ENCODE measurements at regions of chr16 and their contacts with region 1.

Region 1: DNA sequence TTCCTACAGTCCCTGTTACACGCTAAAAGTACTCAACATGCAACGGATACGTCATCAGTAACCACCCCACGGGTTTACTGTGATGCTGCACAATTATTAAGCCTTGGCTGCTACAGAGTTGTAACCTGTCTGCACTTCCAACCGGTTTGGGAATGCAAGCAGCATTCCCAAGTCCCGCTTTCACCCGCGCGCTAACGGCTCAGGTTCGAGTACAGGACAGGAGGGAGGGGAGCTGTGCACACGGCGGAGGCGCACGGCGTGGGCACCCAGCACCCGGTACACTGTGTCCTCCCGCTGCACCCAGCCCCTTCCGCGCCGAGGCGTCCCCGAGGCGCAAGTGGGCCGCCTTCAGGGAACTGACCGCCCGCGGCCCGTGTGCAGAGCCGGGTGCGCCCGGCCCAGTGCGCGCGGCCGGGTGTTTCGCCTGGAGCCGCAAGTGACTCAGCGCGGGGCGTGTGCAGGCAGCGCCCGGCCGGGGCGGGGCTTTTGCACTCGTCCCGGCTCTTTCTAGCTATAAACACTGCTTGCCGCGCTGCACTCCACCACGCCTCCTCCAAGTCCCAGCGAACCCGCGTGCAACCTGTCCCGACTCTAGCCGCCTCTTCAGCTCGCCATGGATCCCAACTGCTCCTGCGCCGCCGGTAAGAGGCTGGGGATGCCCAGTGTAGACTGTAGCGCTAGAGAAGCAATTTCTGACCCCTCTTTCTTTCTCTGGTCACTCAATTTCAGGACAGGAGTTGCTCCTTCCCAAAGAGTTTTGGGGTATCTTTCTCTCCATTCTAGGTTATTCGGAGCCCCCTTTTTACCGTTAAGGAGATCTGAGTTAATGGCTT is at the start of gene MT2A:
- DNase-seq: no peak
- ATAC-seq: peak; percentile 93
- H3K4me3 ChIP-seq: peak within 1 kb of the TSS; percentile 70
- H3K27ac ChIP-seq: no peak within 1 kb of the TSS
- H3K4me1 ChIP-seq: peaks cover 25% of the 10 kb centered on the region
- H3K27me3 ChIP-seq: no peaks in the 10 kb centered on the region; a peak in 1 of 4 replicates
- CTCF ChIP-seq: no peak
- EP300 ChIP-seq: no peak
- POLR2A ChIP-seq: peak; percentile 67
- RAD21 ChIP-seq: no peak
- polyA plus RNA-seq, gene MT2A: 56.3 to 75.3 TPM

Region 2: GRCh38 chr16:56623637-56624036 is 15.4 kb after region 1 on chr16:
- CTCF ChIA-PET with region 1: interaction called, 7 read pairs
- POLR2A ChIA-PET with region 1: interaction called, 4 read pairs
- RAD21 ChIA-PET with region 1: interaction called, 23 read pairs
- SMC1A ChIA-PET with region 1: interaction called, 12 read pairs
- in situ Hi-C with region 1: no loop called
- intact Hi-C with region 1: no loop called
- DNase-seq: no peak
- ATAC-seq: no peak
- H3K4me3 ChIP-seq: no peak overlapping the region
- H3K27ac ChIP-seq: no peak overlapping the region
- H3K4me1 ChIP-seq: 0 out of 2 replicates have a peak, but pooled peaks cover 3% of the 10 kb centered on the region
- H3K27me3 ChIP-seq: no peaks in the 10 kb centered on the region; a peak in 2 of 4 replicates
- CTCF ChIP-seq: no peak
- EP300 ChIP-seq: no peak
- POLR2A ChIP-seq: no peak
- RAD21 ChIP-seq: no peak

Region 3: DNA sequence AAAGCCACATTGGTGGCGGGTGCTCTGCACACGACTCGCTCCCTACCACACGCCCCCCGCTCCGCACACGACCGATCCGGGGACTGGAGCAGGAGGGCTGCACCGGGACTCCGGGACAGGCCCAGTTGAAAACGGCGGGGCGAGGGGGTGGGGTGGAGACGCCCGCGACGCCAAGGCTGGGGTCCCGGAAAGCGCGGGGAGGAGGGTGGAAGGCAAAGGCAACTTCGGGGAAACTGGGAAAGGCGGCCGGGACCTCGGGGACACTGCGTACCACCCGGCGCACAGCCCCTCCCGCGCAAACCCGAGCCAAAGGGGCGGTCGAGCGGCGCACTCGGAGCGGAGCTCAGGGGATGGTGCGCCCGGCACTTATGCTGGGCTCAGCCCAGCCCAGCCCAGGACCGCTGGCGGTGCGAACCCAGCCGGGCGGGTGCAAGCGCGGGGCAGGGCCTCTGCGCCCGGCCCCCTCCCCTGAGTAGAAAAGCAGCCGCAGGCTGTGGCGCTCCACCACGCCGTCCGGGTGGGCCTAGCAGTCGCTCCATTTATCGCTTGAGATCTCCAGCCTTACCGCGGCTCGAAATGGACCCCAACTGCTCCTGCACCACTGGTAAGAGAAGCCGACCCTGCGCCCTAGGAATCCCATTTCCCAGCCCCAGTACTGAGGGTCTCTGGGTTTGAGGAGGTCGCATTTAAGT is 24.0 kb after region 1 on chr16 and contains the start of gene MT1M:
- CTCF ChIA-PET with region 1: interaction called, 5 read pairs
- POLR2A ChIA-PET with region 1: interaction called, 6 read pairs
- RAD21 ChIA-PET with region 1: interaction called, 23 read pairs
- SMC1A ChIA-PET with region 1: interaction called, 27 read pairs
- in situ Hi-C with region 1: no loop called
- intact Hi-C with region 1: loop called (anchors 1 kb)
- DNase-seq: no peak
- ATAC-seq: peak; percentile 23
- H3K4me3 ChIP-seq: no peak within 1 kb of the TSS
- H3K27ac ChIP-seq: no peak within 1 kb of the TSS
- H3K4me1 ChIP-seq: peaks cover 15% of the 10 kb centered on the region
- H3K27me3 ChIP-seq: peaks cover 14 to 24% of the 10 kb centered on the region in 2 experiments
- CTCF ChIP-seq: no peak
- EP300 ChIP-seq: no peak
- POLR2A ChIP-seq: no peak
- RAD21 ChIP-seq: no peak
- polyA plus RNA-seq, gene MT1M: not detected

Region 4: GRCh38 chr16:56643080-56643778 is 35.0 kb after region 1 on chr16:
- CTCF ChIA-PET with region 1: interaction called, 10 read pairs
- POLR2A ChIA-PET with region 1: no interaction called
- RAD21 ChIA-PET with region 1: no interaction called
- SMC1A ChIA-PET with region 1: interaction called, 13 read pairs
- in situ Hi-C with region 1: no loop called
- intact Hi-C with region 1: no loop called
- DNase-seq: no peak
- ATAC-seq: peak; percentile 99
- H3K4me3 ChIP-seq: no peak overlapping the region
- H3K27ac ChIP-seq: no peak overlapping the region
- H3K4me1 ChIP-seq: no peaks in the 10 kb centered on the region
- H3K27me3 ChIP-seq: peaks cover 10 to 25% of the 10 kb centered on the region in 2 experiments
- CTCF ChIP-seq: peak in 2 of 3 experiments; percentile 21 to 39; a peak in 3 of 6 replicates
- EP300 ChIP-seq: no peak
- POLR2A ChIP-seq: no peak
- RAD21 ChIP-seq: no peak

Region 5: GRCh38 chr16:56681939-56682702 is 73.9 kb after region 1 on chr16 and contains the start of gene MT1X:
- CTCF ChIA-PET with region 1: interaction called, 5 read pairs
- POLR2A ChIA-PET with region 1: interaction called, 3 read pairs
- RAD21 ChIA-PET with region 1: interaction called, 3 read pairs
- SMC1A ChIA-PET with region 1: no interaction called
- in situ Hi-C with region 1: no loop called
- intact Hi-C with region 1: loop called (anchors 1 kb)
- DNase-seq: peak; percentile 7
- ATAC-seq: peak; percentile 100
- H3K4me3 ChIP-seq: peak within 1 kb of the TSS; percentile 76
- H3K27ac ChIP-seq: peak within 1 kb of the TSS; percentile 39; the same call in 1 of the 2 replicates
- H3K4me1 ChIP-seq: peaks cover 12% of the 10 kb centered on the region
- H3K27me3 ChIP-seq: no peaks in the 10 kb centered on the region; a peak in 1 of 4 replicates
- CTCF ChIP-seq: no peak
- EP300 ChIP-seq: no peak
- POLR2A ChIP-seq: peak; percentile 80
- RAD21 ChIP-seq: no peak
- polyA plus RNA-seq, gene MT1X: 45.6 to 51.9 TPM

Measured in GM12878 (cell line).